ENCODE measurements at regions of chr3 and their contacts with region 1.

Region 1: GRCh38 chr3:46509661-46510187 is 11.9 kb downstream of the RTP3 start:
- DNase-seq: no peak
- H3K4me3 ChIP-seq: no peak overlapping the region
- CTCF ChIP-seq: no peak

Region 2: GRCh38 chr3:46607603-46608028 is 97.9 kb after region 1 on chr3:
- in situ Hi-C with region 1: loop called (anchors 5 kb)
- DNase-seq: no peak
- H3K4me3 ChIP-seq: no peak overlapping the region
- CTCF ChIP-seq: peak; percentile 20

Region 3: DNA sequence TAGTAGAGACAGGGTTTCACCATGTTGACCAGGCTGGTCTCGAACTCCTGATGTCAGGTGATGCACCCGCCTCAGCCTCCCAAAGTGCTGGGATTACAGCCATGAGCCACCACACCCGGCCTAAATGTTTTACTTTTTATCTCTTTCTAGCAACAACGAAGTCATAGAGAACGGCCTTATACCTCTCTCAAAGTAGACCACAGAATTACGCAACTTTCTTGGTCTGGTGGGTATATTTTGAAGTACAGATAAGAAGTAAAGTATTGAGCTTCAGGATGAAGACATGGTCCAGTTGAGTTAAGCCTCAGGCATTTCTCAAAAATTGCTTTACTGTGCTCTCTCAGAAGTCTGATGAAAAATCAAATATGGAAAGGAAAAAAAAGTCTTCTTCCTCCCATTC is 133.2 kb after region 1 on chr3:
- in situ Hi-C with region 1: no loop called
- DNase-seq: no peak
- H3K4me3 ChIP-seq: no peak overlapping the region
- CTCF ChIP-seq: no peak

Measured in astrocyte of the cerebellum (primary cell).